ENCODE measurements at regions of chr3 and their contacts with region 1.

Region 1: GRCh38 chr3:120730576-120731542 is 11.5 kb downstream of the RABL3 start:
- DNase-seq: no peak
- H3K4me3 ChIP-seq: no peak overlapping the region
- H3K27ac ChIP-seq: no peak overlapping the region
- H3K4me1 ChIP-seq: no peaks in the 10 kb centered on the region
- H3K27me3 ChIP-seq: no peaks in the 10 kb centered on the region
- CTCF ChIP-seq: no peak

Region 2: GRCh38 chr3:120587332-120587975 is 143.4 kb before region 1 on chr3:
- CTCF ChIA-PET with region 1: no interaction called
- POLR2A ChIA-PET with region 1: interaction called, 15 read pairs
- intact Hi-C with region 1: no loop called
- DNase-seq: no peak
- H3K4me3 ChIP-seq: no peak overlapping the region
- H3K27ac ChIP-seq: no peak overlapping the region
- H3K4me1 ChIP-seq: no peaks in the 10 kb centered on the region
- H3K27me3 ChIP-seq: no peaks in the 10 kb centered on the region
- CTCF ChIP-seq: no peak

Measured in PC-9 (cell line).